Thyroid gland (tissue), 4 donors: ENCODE measurements at regions of chr9 and their contacts with region 1.

Region 1: DNA sequence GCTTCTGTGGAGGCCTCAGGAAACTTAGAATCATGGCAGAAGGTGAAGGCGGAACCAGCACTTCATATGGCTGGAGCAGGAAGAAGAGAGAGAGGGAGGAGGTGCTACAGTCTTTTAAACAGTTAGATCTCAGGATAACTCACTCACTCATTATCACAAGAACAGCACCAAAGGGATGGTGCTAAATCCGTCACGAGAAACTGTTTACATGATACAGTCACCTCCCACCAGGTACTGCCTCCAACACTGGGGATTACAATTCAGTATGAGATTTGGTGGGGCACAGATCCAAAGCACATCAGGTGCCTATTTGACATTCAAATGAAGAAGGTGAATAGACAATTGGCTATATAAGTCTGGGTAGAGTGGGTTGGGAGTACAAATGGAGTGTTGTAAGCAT is 35.2 kb downstream of the FKTN start:
- DNase-seq: no peak
- H3K4me3 ChIP-seq: no peak overlapping the region
- H3K27ac ChIP-seq: no peak overlapping the region
- H3K4me1 ChIP-seq: no peaks in the 10 kb centered on the region
- H3K27me3 ChIP-seq: no peaks in the 10 kb centered on the region
- CTCF ChIP-seq: no peak
- POLR2A ChIP-seq: no peak

Region 2: GRCh38 chr9:105881654-105882349 is 288.7 kb after region 1 on chr9:
- intact Hi-C with region 1: loop called (anchors 10 kb)
- DNase-seq: peak; percentile 73 to 76
- H3K4me3 ChIP-seq: no peak overlapping the region
- H3K27ac ChIP-seq: no peak overlapping the region
- H3K4me1 ChIP-seq: no peaks in the 10 kb centered on the region
- H3K27me3 ChIP-seq: no peaks in the 10 kb centered on the region
- CTCF ChIP-seq: peak; percentile 49 to 83 (median 69)
- POLR2A ChIP-seq: no peak